Gastrocnemius medialis (tissue), 4 donors: ENCODE measurements at regions of chr7 and their contacts with region 1.

Region 1: DNA sequence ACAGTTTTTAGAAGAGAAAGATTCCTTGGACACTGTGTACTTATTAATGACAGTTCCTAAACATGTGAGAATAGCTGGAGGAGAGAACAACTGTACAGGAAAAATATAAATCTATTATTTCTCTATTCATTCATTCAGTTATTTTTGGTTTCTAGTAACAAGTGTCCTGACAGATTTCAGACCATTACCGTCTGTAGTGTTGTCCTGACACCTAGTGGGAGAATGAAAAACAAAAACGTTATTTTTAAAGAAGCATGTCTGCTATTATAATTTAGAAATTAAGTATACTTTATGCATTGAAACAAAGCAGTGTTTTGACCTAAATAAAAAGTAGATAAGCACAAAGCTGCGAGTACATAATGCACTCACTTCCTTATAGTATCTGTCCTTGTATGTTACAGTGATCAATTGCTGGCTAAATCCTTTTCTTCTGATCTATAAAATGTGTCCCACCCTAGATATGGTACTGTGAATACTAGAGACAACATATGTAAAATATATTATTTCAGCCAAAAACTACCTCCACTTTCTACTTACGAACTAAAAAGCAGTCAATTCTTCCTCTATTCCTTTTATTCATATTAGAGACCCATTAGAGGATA is 575.6 kb downstream of the ARL4A start:
- DNase-seq: no peak
- ATAC-seq: no peak
- H3K4me3 ChIP-seq: no peak overlapping the region
- H3K27ac ChIP-seq: no peak overlapping the region
- H3K4me1 ChIP-seq: no peaks in the 10 kb centered on the region
- H3K27me3 ChIP-seq: no peaks in the 10 kb centered on the region
- CTCF ChIP-seq: peak; percentile 31 to 59 (median 44)
- POLR2A ChIP-seq: no peak

Region 2: GRCh38 chr7:12524794-12525386 is 738.1 kb before region 1 on chr7:
- in situ Hi-C with region 1: loop called in 3 of 4 experiments (anchors 10 to 25 kb)
- intact Hi-C with region 1: no loop called
- DNase-seq: no peak
- ATAC-seq: no peak
- H3K4me3 ChIP-seq: no peak overlapping the region
- H3K27ac ChIP-seq: no peak overlapping the region
- H3K4me1 ChIP-seq: no peaks in the 10 kb centered on the region
- H3K27me3 ChIP-seq: no peaks in the 10 kb centered on the region
- CTCF ChIP-seq: peak in 3 of 5 experiments; percentile 45 to 56 (median 52)
- POLR2A ChIP-seq: no peak

Region 3: GRCh38 chr7:12638851-12639467 is 624.1 kb before region 1 on chr7:
- in situ Hi-C with region 1: loop called (anchors 5 to 25 kb)
- intact Hi-C with region 1: loop called (anchors 1 kb)
- DNase-seq: no peak
- ATAC-seq: no peak
- H3K4me3 ChIP-seq: no peak overlapping the region
- H3K27ac ChIP-seq: no peak overlapping the region
- H3K4me1 ChIP-seq: no peaks in the 10 kb centered on the region
- H3K27me3 ChIP-seq: no peaks in the 10 kb centered on the region
- CTCF ChIP-seq: peak; percentile 17 to 68 (median 45)
- POLR2A ChIP-seq: no peak

Region 4: GRCh38 chr7:12647364-12648219 is 615.4 kb before region 1 on chr7:
- in situ Hi-C with region 1: loop called (anchors 5 to 25 kb)
- intact Hi-C with region 1: no loop called
- DNase-seq: no peak
- ATAC-seq: no peak
- H3K4me3 ChIP-seq: no peak overlapping the region
- H3K27ac ChIP-seq: no peak overlapping the region
- H3K4me1 ChIP-seq: no peaks in the 10 kb centered on the region
- H3K27me3 ChIP-seq: no peaks in the 10 kb centered on the region
- CTCF ChIP-seq: no peak
- POLR2A ChIP-seq: no peak

Region 5: GRCh38 chr7:12674849-12675248 is 588.2 kb before region 1 on chr7:
- in situ Hi-C with region 1: loop called in 1 of 4 experiments (anchors 10 kb)
- intact Hi-C with region 1: no loop called
- DNase-seq: no peak
- ATAC-seq: peak in 1 of 2 donors; percentile 63
- H3K4me3 ChIP-seq: no peak overlapping the region
- H3K27ac ChIP-seq: no peak overlapping the region
- H3K4me1 ChIP-seq: peaks cover 4% of the 10 kb centered on the region in 2 donors
- H3K27me3 ChIP-seq: no peaks in the 10 kb centered on the region
- CTCF ChIP-seq: peak in 2 of 5 experiments; percentile 23
- POLR2A ChIP-seq: no peak

Region 6: DNA sequence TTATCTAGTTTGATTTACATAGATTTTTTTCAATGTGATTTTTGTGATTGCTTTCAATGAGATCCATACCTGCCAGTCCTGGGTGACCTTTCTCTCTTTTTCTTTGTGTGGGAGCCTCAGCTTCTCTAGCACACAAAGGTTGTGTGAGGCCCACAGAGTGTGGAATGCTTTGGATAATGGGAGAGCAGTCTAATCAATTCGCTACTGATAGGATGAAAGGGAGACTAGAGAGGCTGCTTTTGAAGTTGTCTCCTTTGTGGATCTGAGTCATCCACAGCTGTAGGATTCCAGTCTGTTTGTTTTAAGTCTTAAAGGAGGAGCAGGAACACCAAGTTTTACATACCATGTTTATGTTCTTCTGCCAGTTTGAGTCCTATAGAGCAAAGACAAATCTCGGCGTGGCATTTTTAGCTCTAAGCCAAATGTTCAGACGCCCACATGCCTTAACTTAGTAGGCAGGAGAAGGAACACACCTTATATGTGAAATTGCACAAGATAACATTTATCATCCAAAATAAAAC is 245.6 kb before region 1 on chr7:
- in situ Hi-C with region 1: no loop called
- intact Hi-C with region 1: no loop called
- DNase-seq: no peak
- ATAC-seq: no peak
- H3K4me3 ChIP-seq: no peak overlapping the region
- H3K27ac ChIP-seq: no peak overlapping the region
- H3K4me1 ChIP-seq: no peaks in the 10 kb centered on the region
- H3K27me3 ChIP-seq: no peaks in the 10 kb centered on the region
- CTCF ChIP-seq: no peak
- POLR2A ChIP-seq: no peak

Region 7: DNA sequence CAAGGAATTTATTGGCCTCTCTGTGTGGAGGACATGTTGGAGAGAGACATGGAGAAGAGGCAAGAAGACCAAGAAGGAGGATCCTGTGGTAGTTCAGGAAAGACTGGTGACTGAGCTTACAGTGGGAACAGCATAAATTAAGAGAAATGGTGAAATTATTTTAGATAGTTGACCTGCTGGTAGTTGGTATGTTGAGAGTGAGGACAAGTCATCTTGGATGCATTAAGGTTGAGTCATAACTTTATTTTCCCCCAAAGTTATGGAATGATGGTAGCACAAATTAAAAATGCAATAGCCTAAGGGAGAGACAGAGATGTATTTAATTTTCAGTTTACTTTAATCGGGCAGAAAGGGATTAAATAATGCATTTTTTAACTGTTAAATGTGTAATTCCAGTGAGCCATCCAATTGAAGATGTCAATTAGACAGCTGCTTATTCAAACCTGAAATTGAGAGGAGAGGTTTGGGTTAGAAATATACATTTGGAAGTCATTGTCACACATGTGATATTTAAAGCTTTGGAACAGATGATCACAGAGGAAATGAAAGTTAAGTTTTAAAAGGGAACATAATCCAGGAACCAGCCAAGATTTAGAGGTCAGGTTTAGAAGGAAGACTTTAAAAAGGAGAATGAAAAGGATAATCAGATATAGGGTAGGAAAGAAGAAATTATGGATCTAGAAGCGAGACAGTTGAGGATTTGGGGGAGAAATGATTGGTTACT is 1558.9 kb after region 1 on chr7:
- in situ Hi-C with region 1: no loop called
- intact Hi-C with region 1: no loop called
- DNase-seq: no peak
- ATAC-seq: no peak
- H3K4me3 ChIP-seq: no peak overlapping the region
- H3K27ac ChIP-seq: no peak overlapping the region
- H3K4me1 ChIP-seq: peaks cover 0 to 6% of the 10 kb centered on the region in 2 donors
- H3K27me3 ChIP-seq: no peaks in the 10 kb centered on the region
- CTCF ChIP-seq: no peak
- POLR2A ChIP-seq: no peak